A549 (cell line): ENCODE measurements at regions of chr22 and their contacts with region 1.

Region 1: DNA sequence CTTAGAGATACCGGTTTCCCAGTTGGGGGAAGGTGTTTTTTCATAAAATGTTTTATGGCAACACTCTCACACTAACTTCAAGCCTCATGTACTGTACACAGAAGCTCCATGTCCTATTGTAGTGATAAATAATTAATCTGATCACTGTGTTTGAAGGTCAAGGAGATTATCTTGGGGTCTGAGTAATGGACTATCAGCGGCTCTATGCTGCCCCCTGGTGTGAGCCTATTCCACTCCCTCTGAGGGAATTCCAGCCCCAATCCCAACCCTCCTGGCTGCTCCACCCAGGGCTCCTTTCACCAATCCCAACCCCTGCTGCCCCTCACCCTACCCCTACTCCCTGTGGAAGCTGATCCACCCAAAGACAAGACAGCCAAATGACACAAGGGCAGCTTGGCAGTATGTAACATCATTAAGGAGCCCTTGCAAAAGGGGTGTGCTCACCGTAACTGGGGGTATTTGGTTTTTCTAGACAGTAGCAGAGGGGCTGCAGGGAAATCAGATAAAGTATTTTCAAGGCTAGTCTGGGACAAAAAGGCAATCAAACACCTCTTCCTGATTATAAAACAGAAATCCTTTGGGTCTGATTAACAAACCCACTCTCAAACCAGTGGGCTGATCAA is 22.3 kb downstream of the HPS4 start:
- DNase-seq: peak; percentile 32 to 46
- ATAC-seq: peak; percentile 89 to 97
- H3K4me3 ChIP-seq: no peak overlapping the region
- H3K27ac ChIP-seq: no peak overlapping the region
- H3K4me1 ChIP-seq: no peaks in the 10 kb centered on the region
- CTCF ChIP-seq: peak; percentile 62
- EP300 ChIP-seq: no peak
- POLR2A ChIP-seq: no peak
- RAD21 ChIP-seq: peak; percentile 58 to 64

Region 2: DNA sequence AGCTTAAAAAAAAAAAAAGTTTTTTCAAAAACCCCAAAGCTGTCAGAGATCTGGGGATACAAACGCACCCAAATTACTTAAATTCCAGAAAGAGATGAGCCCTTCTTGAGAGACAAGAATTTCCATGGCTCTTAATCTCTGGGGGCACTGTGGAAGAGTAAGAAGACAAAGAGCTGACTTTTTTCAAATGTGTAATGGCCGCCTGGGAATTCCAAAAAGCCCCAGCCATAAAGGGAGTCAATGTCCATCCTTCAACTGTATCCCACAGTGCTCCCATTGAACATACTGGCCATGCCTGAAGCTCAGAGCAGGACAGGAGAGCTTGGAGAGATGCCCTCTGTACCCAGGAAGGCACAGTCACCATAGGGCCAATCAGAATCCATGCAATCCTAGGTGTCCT is 69.7 kb before region 1 on chr22:
- CTCF ChIA-PET with region 1: interaction called, 85 read pairs
- POLR2A ChIA-PET with region 1: no interaction called
- DNase-seq: no peak
- ATAC-seq: no peak
- H3K4me3 ChIP-seq: no peak overlapping the region
- H3K27ac ChIP-seq: no peak overlapping the region
- H3K4me1 ChIP-seq: no peaks in the 10 kb centered on the region
- CTCF ChIP-seq: no peak
- EP300 ChIP-seq: no peak
- POLR2A ChIP-seq: no peak
- RAD21 ChIP-seq: no peak

Region 3: GRCh38 chr22:26404851-26405421 is 56.4 kb before region 1 on chr22:
- CTCF ChIA-PET with region 1: interaction called, 85 read pairs
- POLR2A ChIA-PET with region 1: no interaction called
- DNase-seq: no peak
- ATAC-seq: no peak
- H3K4me3 ChIP-seq: no peak overlapping the region
- H3K27ac ChIP-seq: no peak overlapping the region
- H3K4me1 ChIP-seq: no peaks in the 10 kb centered on the region
- CTCF ChIP-seq: no peak
- EP300 ChIP-seq: no peak
- POLR2A ChIP-seq: no peak
- RAD21 ChIP-seq: no peak

Region 4: DNA sequence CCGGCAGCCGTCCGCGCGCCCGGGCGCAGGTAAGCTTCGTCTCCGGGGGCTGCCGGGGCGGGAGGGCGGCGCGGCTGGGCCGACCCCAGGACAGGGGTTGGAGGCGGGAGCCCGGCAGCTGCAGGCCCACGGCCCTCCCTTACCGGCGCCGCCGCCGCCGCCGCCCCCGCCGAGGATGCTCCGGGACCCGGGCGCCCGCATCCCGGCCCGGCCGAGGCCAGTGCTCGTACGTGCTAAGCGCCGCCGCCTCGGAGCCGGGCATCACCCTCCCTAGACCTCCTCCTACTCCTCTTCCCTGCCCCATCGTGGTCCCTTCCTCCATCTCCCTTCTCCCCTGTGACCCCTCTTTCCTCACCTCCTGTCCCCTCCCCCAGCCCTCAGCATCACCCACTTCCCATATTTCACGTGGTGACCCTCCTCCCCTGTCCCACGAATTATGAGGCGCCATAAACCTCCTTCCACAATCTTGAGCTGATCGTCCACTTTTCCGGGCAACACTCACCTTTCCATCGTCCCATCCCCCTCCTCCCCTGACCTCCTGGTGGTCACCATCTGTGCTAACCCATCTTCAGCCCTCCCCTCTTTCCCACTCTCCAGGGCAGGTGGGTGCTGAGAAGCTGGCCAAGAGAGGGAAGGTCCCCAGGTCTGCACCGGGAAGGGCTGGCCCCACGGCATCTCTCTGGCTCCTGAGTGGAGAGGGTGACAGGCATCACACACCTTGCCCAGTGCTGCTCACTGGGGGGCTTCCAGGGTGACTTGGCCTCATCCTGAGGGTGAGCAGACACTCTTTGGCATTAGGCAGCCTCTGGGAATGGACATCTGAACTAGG is 31.6 kb before region 1 on chr22:
- CTCF ChIA-PET with region 1: interaction called, 14 read pairs
- POLR2A ChIA-PET with region 1: no interaction called
- DNase-seq: no peak
- ATAC-seq: peak; percentile 31 to 33; a peak in 1 of 6 replicates
- H3K4me3 ChIP-seq: peak overlapping the region; percentile 72
- H3K27ac ChIP-seq: peak overlapping the region; percentile 66 to 94
- H3K4me1 ChIP-seq: no peaks in the 10 kb centered on the region; the same call in 2 of the 3 replicates
- CTCF ChIP-seq: no peak
- EP300 ChIP-seq: no peak
- POLR2A ChIP-seq: no peak
- RAD21 ChIP-seq: no peak

Region 5: DNA sequence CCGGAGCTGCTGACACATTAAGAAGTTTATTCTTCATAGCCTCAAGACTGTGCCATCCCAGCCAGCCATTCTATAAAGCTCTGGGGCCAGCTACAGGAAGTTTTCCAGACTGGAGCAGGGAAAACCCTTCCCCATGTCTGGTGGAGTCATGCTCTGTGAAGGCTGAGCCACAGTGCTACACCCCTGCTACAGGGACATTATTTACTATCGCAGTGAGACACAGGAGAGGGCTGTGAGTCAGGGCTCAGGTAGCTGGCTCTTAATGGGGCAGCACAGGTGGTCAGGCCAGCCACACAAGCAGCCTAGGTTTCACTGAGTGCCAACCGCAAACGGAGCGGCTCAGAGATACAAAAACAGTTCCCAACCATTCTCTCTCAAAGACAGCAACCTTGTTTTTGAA is 10.2 kb after region 1 on chr22:
- CTCF ChIA-PET with region 1: interaction called, 20 read pairs
- POLR2A ChIA-PET with region 1: no interaction called
- DNase-seq: peak; percentile 57 to 76
- ATAC-seq: peak; percentile 95 to 99
- H3K4me3 ChIP-seq: no peak overlapping the region
- H3K27ac ChIP-seq: peak overlapping the region; percentile 70 to 81
- H3K4me1 ChIP-seq: peaks cover 18% of the 10 kb centered on the region
- CTCF ChIP-seq: no peak
- EP300 ChIP-seq: peak in 1 of 2 experiments; percentile 28; a peak in 1 of 5 replicates
- POLR2A ChIP-seq: no peak
- RAD21 ChIP-seq: no peak